ENCODE measurements at regions of chr6 and their contacts with region 1.

Region 1: GRCh38 chr6:155327326-155328073 is 13.2 kb upstream of the TFB1M start:
- DNase-seq: peak; percentile 31 to 83
- ATAC-seq: peak; percentile 61 to 68 (median 68)
- H3K4me3 ChIP-seq: no peak overlapping the region
- H3K4me3 Mint-ChIP-seq: no peak overlapping the region
- H3K27ac ChIP-seq: no peak overlapping the region
- H3K27ac Mint-ChIP-seq: no peak overlapping the region
- H3K4me1 ChIP-seq: no peaks in the 10 kb centered on the region
- H3K4me1 Mint-ChIP-seq: peaks cover 5% of the 10 kb centered on the region in 2 donors
- H3K27me3 ChIP-seq: no peaks in the 10 kb centered on the region
- H3K27me3 Mint-ChIP-seq: no peaks in the 10 kb centered on the region
- CTCF ChIP-seq: peak; percentile 98

Region 2: GRCh38 chr6:155530219-155530834 is 202.8 kb after region 1 on chr6:
- intact Hi-C with region 1: loop called (anchors 1 kb)
- DNase-seq: peak in 1 of 2 donors; percentile 57
- ATAC-seq: peak in 1 of 3 donors; percentile 55
- H3K4me3 ChIP-seq: no peak overlapping the region
- H3K4me3 Mint-ChIP-seq: no peak overlapping the region
- H3K27ac ChIP-seq: no peak overlapping the region
- H3K27ac Mint-ChIP-seq: no peak overlapping the region
- H3K4me1 ChIP-seq: no peaks in the 10 kb centered on the region
- H3K4me1 Mint-ChIP-seq: peaks cover 7 to 10% of the 10 kb centered on the region in 2 donors
- H3K27me3 ChIP-seq: no peaks in the 10 kb centered on the region
- H3K27me3 Mint-ChIP-seq: no peaks in the 10 kb centered on the region
- CTCF ChIP-seq: peak; percentile 58

Region 3: GRCh38 chr6:156564127-156564806 is 1236.8 kb after region 1 on chr6:
- intact Hi-C with region 1: loop called (anchors 5 kb)
- DNase-seq: peak; percentile 71 to 86
- ATAC-seq: peak; percentile 88 to 99 (median 99)
- H3K4me3 ChIP-seq: no peak overlapping the region
- H3K4me3 Mint-ChIP-seq: no peak overlapping the region
- H3K27ac ChIP-seq: no peak overlapping the region
- H3K27ac Mint-ChIP-seq: no peak overlapping the region
- H3K4me1 ChIP-seq: peaks cover 4% of the 10 kb centered on the region
- H3K4me1 Mint-ChIP-seq: peaks cover 0 to 5% of the 10 kb centered on the region in 2 donors
- H3K27me3 ChIP-seq: peaks cover 4% of the 10 kb centered on the region
- H3K27me3 Mint-ChIP-seq: peaks cover 41 to 46% of the 10 kb centered on the region in 2 donors
- CTCF ChIP-seq: peak; percentile 92

Measured in natural killer cell (primary cell).